Panc1 (cell line): ENCODE measurements at regions of chr9 and their contacts with region 1.

Region 1: DNA sequence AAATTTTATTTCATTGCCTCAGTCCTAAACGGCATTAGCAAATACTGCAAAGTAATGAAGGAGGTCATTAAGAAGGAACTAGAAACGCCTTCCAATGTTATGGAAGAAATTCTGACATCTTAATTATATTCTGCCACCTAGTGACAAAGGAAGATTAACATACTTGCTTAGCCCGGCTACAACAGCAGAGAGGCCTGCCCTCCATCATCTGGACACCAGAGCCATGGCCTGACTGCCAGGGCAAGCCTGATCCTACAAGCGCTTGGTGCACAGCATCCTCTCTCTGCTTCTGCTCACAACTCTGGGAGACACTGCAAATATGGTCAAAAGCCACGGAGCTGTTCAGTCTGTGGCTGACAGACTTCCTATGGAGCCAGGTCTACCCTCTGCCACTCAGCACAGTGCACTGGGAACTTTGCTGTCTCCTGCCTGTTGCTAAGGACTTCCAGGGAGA is 87.3 kb upstream of the SLC44A1 start:
- DNase-seq: no peak
- ATAC-seq: peak; percentile 91
- H3K4me3 ChIP-seq: no peak overlapping the region
- H3K27ac ChIP-seq: no peak overlapping the region
- H3K4me1 ChIP-seq: no peaks in the 10 kb centered on the region
- H3K27me3 ChIP-seq: no peaks in the 10 kb centered on the region
- CTCF ChIP-seq: peak; percentile 53

Region 2: GRCh38 chr9:104808035-104808614 is 349.0 kb before region 1 on chr9:
- CTCF ChIA-PET with region 1: no interaction called
- POLR2A ChIA-PET with region 1: no interaction called
- in situ Hi-C with region 1: no loop called
- intact Hi-C with region 1: loop called (anchors 10 kb)
- DNase-seq: no peak
- ATAC-seq: no peak
- H3K4me3 ChIP-seq: no peak overlapping the region
- H3K27ac ChIP-seq: no peak overlapping the region
- H3K4me1 ChIP-seq: no peaks in the 10 kb centered on the region
- H3K27me3 ChIP-seq: no peaks in the 10 kb centered on the region
- CTCF ChIP-seq: peak; percentile 19; the same call in 1 of the 2 replicates

Region 3: GRCh38 chr9:104820336-104820735 is 336.8 kb before region 1 on chr9:
- CTCF ChIA-PET with region 1: no interaction called
- POLR2A ChIA-PET with region 1: no interaction called
- in situ Hi-C with region 1: no loop called
- intact Hi-C with region 1: no loop called
- DNase-seq: no peak
- ATAC-seq: no peak
- H3K4me3 ChIP-seq: no peak overlapping the region
- H3K27ac ChIP-seq: no peak overlapping the region
- H3K4me1 ChIP-seq: no peaks in the 10 kb centered on the region
- H3K27me3 ChIP-seq: no peaks in the 10 kb centered on the region
- CTCF ChIP-seq: no peak

Region 4: GRCh38 chr9:104934691-104935500 is 222.3 kb before region 1 on chr9:
- CTCF ChIA-PET with region 1: no interaction called
- POLR2A ChIA-PET with region 1: no interaction called
- in situ Hi-C with region 1: no loop called
- intact Hi-C with region 1: no loop called
- DNase-seq: no peak
- ATAC-seq: no peak
- H3K4me3 ChIP-seq: no peak overlapping the region
- H3K27ac ChIP-seq: no peak overlapping the region
- H3K4me1 ChIP-seq: no peaks in the 10 kb centered on the region
- H3K27me3 ChIP-seq: no peaks in the 10 kb centered on the region
- CTCF ChIP-seq: no peak

Region 5: GRCh38 chr9:105138306-105138801 is 18.8 kb before region 1 on chr9:
- CTCF ChIA-PET with region 1: no interaction called
- POLR2A ChIA-PET with region 1: no interaction called
- in situ Hi-C with region 1: no loop called
- intact Hi-C with region 1: no loop called
- DNase-seq: no peak
- ATAC-seq: no peak
- H3K4me3 ChIP-seq: no peak overlapping the region
- H3K27ac ChIP-seq: no peak overlapping the region
- H3K4me1 ChIP-seq: no peaks in the 10 kb centered on the region
- H3K27me3 ChIP-seq: no peaks in the 10 kb centered on the region
- CTCF ChIP-seq: no peak

Region 6: DNA sequence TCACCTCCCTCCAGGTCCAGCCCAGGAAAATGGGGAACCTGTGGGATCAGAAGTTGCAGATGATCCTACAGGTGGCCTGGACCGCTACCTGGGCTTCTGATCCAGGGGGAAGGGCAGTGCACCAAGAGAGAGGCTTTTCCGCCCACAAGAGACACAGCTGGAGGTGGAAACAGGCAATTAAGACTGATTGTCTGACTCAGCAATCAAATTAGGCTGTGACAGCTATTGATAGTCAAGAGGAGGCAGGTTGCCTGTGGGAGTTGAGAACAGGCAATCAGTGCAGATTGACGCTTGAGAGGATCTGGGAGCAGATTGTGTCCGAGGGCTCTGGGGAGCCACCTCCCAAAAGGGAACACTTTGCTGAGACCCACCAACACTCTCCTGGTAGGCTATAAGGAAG is 16.1 kb after region 1 on chr9:
- CTCF ChIA-PET with region 1: no interaction called
- POLR2A ChIA-PET with region 1: no interaction called
- in situ Hi-C with region 1: no loop called
- intact Hi-C with region 1: no loop called
- DNase-seq: no peak
- ATAC-seq: no peak
- H3K4me3 ChIP-seq: no peak overlapping the region
- H3K27ac ChIP-seq: no peak overlapping the region
- H3K4me1 ChIP-seq: no peaks in the 10 kb centered on the region
- H3K27me3 ChIP-seq: no peaks in the 10 kb centered on the region
- CTCF ChIP-seq: no peak